ENCODE measurements at regions of chr13 and their contacts with region 1.

Region 1: DNA sequence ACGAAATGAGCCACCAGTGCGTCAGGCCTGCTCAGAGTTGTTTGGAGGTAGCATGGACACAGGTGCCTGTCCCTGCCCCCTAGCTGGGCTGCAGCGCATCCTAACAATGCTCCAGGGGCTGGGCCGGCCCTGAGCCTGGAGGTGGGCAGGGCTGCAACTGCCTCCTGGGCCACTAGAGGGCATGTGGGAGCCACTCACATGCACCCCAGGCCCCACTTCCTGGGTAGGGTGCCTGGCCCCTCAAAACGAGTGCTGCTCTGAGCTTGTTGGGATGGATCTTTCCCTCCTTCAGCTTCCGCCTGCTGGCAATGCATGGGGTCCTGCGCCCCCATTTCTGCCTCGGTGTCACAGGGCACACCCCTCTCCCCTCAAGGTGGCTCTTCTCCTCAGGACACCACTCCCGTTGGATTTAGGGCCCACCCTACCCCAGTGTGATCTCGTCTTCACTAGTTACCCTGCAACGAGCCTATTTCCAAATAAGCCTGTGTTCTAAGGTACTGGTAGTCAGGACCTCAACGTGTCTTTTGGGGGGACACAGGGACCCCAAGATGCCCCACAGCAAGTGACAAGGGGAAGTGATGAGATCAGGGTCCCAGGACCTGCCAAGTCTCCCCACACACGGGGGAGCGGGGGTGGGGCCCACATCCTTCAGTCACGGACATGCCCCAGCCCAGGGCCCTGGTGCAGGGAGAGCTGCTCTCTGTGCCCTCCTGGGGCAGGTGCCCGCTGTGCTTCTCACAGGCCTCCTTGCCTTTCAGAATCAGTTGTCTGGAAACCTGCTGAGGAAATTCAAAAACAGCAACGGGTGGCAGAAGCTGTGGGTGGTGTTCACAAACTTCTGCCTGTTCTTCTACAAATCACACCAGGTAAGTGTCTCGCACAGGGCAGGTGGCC is 131.3 kb downstream of the STK24 start:
- DNase-seq: peak; percentile 83
- ATAC-seq: peak; percentile 98
- H3K4me3 ChIP-seq: peak overlapping the region in 2 of 5 experiments; percentile 19 to 30
- H3K4me3 Mint-ChIP-seq: peak overlapping the region; percentile 58
- H3K27ac ChIP-seq: peak overlapping the region; percentile 52 to 69
- H3K27ac Mint-ChIP-seq: peak overlapping the region; percentile 81
- H3K4me1 ChIP-seq: peaks cover 9 to 12% of the 10 kb centered on the region in 2 donors
- H3K4me1 Mint-ChIP-seq: peaks cover 11% of the 10 kb centered on the region
- H3K27me3 ChIP-seq: no peaks in the 10 kb centered on the region
- H3K27me3 Mint-ChIP-seq: no peaks in the 10 kb centered on the region
- CTCF ChIP-seq: peak; percentile 99

Region 2: GRCh38 chr13:98570929-98571372 is 125.4 kb after region 1 on chr13:
- CTCF ChIA-PET with region 1: interaction called, 13 read pairs
- POLR2A ChIA-PET with region 1: no interaction called
- intact Hi-C with region 1: loop called (anchors 10 kb)
- DNase-seq: peak; percentile 80
- ATAC-seq: peak; percentile 88
- H3K4me3 ChIP-seq: peak overlapping the region; percentile 41 to 73 (median 43)
- H3K4me3 Mint-ChIP-seq: peak overlapping the region; percentile 91
- H3K27ac ChIP-seq: peak overlapping the region; percentile 78
- H3K27ac Mint-ChIP-seq: peak overlapping the region; percentile 95
- H3K4me1 ChIP-seq: peaks cover 85 to 90% of the 10 kb centered on the region in 2 donors
- H3K4me1 Mint-ChIP-seq: peaks cover 93% of the 10 kb centered on the region
- H3K27me3 ChIP-seq: no peaks in the 10 kb centered on the region
- H3K27me3 Mint-ChIP-seq: no peaks in the 10 kb centered on the region
- CTCF ChIP-seq: no peak

Region 3: DNA sequence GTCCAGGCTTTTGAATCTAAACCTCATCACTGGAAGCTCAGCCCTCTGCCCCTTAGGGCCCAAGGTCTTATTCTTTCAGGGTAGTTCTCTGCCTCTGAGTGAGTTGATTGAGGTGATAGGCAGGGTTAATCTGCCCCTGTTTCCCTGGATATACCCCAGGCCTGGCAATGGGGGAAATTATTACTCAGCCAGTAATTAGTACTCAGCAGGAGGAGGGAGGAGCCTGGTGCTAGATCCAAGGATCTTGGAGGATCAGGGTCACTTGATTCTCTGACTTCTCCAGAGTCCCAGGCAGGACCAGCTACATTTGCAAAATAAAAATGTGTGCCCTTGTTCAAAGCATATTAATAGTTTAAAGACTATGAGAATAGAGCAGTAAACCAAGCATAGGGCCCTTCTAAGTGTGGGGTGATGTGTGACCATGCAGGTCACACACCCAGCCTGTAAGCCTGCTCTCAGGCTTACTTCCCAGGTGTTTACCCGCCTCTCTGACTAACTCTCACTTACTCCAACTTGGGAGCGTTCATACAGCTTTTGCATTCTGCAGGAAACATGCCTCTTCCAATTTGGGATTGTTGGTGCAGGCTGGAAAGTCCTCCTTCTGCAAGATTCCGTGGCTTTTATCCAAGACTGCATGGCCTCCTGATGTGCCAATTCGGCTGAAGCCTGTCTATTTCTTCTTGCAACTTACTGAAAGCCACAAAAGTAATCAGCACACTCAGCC is 139.2 kb after region 1 on chr13:
- CTCF ChIA-PET with region 1: interaction called, 11 read pairs
- POLR2A ChIA-PET with region 1: no interaction called
- intact Hi-C with region 1: no loop called
- DNase-seq: no peak
- ATAC-seq: no peak
- H3K4me3 ChIP-seq: no peak overlapping the region
- H3K4me3 Mint-ChIP-seq: no peak overlapping the region
- H3K27ac ChIP-seq: no peak overlapping the region
- H3K27ac Mint-ChIP-seq: no peak overlapping the region
- H3K4me1 ChIP-seq: no peaks in the 10 kb centered on the region
- H3K4me1 Mint-ChIP-seq: no peaks in the 10 kb centered on the region
- H3K27me3 ChIP-seq: no peaks in the 10 kb centered on the region
- H3K27me3 Mint-ChIP-seq: no peaks in the 10 kb centered on the region
- CTCF ChIP-seq: no peak

Region 4: DNA sequence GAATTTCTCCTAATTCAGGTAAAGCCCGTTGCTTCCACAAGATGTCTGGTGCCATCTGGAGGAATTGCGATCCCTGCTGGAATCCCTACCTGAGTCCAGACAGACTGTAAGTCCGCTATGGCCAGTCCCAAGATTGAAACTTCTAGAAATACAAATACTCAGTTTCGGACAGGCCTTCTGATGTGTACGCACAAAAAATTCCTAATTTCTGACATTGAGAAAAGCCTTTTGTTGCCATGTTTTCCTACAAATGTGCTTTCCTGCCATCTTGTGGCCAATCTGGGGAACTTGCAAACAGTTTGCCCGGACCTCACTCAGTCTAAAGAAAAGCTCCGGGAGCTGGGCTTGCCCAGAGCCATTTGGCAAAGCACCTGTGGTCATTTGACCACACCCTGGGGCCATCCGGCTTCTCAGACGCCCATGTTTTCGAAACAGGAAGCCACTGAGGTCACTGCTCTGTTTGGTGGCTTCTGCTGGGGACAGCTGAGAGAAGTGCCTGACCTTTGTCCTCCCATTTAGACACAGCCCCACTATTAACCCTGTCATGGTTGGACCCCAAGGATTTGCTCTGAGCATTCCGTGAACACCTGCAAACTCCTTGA is 227.5 kb after region 1 on chr13:
- CTCF ChIA-PET with region 1: interaction called, 68 read pairs
- POLR2A ChIA-PET with region 1: interaction called, 4 read pairs
- intact Hi-C with region 1: loop called (anchors 1 kb)
- DNase-seq: peak; percentile 68
- ATAC-seq: peak; percentile 53
- H3K4me3 ChIP-seq: no peak overlapping the region
- H3K4me3 Mint-ChIP-seq: no peak overlapping the region
- H3K27ac ChIP-seq: no peak overlapping the region
- H3K27ac Mint-ChIP-seq: no peak overlapping the region
- H3K4me1 ChIP-seq: peaks cover 0 to 3% of the 10 kb centered on the region in 2 donors
- H3K4me1 Mint-ChIP-seq: no peaks in the 10 kb centered on the region
- H3K27me3 ChIP-seq: no peaks in the 10 kb centered on the region
- H3K27me3 Mint-ChIP-seq: peaks cover 12% of the 10 kb centered on the region
- CTCF ChIP-seq: peak; percentile 83

Measured in B cell (primary cell).